K562 (cell line): ENCODE measurements at regions of chr5 and their contacts with region 1.

Region 1: GRCh38 chr5:81590498-81591384 is 160.2 kb downstream of the SSBP2 start:
- DNase-seq: peak in 1 of 4 experiments; percentile 13
- ATAC-seq: no peak; the same call in 2 of the 3 replicates
- H3K4me3 ChIP-seq: no peak overlapping the region
- H3K27ac ChIP-seq: no peak overlapping the region
- H3K4me1 ChIP-seq: no peaks in the 10 kb centered on the region
- H3K27me3 ChIP-seq: no peaks in the 10 kb centered on the region
- CTCF ChIP-seq: no peak
- EP300 ChIP-seq: no peak
- POLR2A ChIP-seq: no peak
- RAD21 ChIP-seq: no peak

Region 2: GRCh38 chr5:81058121-81058520 is 532.6 kb before region 1 on chr5:
- CTCF ChIA-PET with region 1: no interaction called
- POLR2A ChIA-PET with region 1: no interaction called
- in situ Hi-C with region 1: loop called (anchors 10 kb)
- intact Hi-C with region 1: no loop called
- DNase-seq: no peak
- ATAC-seq: no peak
- H3K4me3 ChIP-seq: no peak overlapping the region
- H3K27ac ChIP-seq: no peak overlapping the region
- H3K4me1 ChIP-seq: no peaks in the 10 kb centered on the region
- H3K27me3 ChIP-seq: peaks cover 0 to 5% of the 10 kb centered on the region in 2 experiments; a peak in 1 of 5 replicates
- CTCF ChIP-seq: no peak
- EP300 ChIP-seq: no peak
- POLR2A ChIP-seq: no peak
- RAD21 ChIP-seq: no peak

Region 3: GRCh38 chr5:81233080-81233634 is 357.6 kb before region 1 on chr5 and contains the start of gene CKMT2:
- CTCF ChIA-PET with region 1: no interaction called
- POLR2A ChIA-PET with region 1: no interaction called
- in situ Hi-C with region 1: no loop called
- intact Hi-C with region 1: no loop called
- DNase-seq: peak in 2 of 4 experiments; percentile 10 to 22
- ATAC-seq: peak; percentile 77
- H3K4me3 ChIP-seq: no peak within 1 kb of the TSS
- H3K27ac ChIP-seq: no peak within 1 kb of the TSS
- H3K4me1 ChIP-seq: peaks cover 0 to 7% of the 10 kb centered on the region in 2 experiments; a peak in 1 of 5 replicates
- H3K27me3 ChIP-seq: peaks cover 0 to 2% of the 10 kb centered on the region in 2 experiments; a peak in 2 of 5 replicates
- CTCF ChIP-seq: no peak
- EP300 ChIP-seq: no peak
- POLR2A ChIP-seq: no peak
- RAD21 ChIP-seq: no peak
- polyA plus RNA-seq, gene CKMT2: 0.03 TPM in 1 of 2 experiments, not detected in the other